ENCODE measurements at regions of chr10 and their contacts with region 1.

Region 1: DNA sequence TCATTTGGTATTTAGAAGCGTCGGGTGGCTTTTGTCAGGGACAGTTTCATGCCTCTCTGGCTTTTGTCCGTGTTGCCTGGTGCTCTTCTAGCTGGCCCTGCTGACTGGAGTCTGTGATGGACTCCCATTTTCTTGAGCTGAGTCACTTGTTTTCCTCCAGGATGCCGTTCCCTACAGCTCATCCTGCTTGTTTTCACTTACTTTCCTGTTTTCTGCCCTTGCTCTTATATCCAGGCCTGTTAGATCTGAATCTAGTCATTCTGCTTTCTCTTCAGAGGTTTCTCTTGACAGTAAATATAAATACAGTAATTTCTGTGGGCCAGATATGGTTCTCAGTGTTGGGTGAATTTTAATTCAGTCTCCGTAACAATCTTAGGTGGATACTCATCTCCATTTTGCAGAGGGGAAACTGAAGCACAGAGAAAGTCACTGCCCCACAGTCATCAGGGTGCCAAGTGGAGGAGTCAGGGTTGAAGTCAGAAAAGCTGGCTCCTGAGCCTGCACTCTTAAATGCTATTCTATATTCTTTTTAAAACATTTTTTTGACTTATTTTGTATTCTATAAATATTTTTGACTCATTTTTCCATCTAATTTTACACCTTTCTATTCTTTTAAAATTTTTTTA is 85.4 kb downstream of the CCNY start:
- DNase-seq: peak; percentile 82
- H3K4me3 Mint-ChIP-seq: peak overlapping the region; percentile 63
- H3K27ac Mint-ChIP-seq: peak overlapping the region; percentile 99
- H3K4me1 Mint-ChIP-seq: peaks cover 46% of the 10 kb centered on the region
- H3K27me3 Mint-ChIP-seq: no peaks in the 10 kb centered on the region
- CTCF ChIP-seq: no peak

Region 2: DNA sequence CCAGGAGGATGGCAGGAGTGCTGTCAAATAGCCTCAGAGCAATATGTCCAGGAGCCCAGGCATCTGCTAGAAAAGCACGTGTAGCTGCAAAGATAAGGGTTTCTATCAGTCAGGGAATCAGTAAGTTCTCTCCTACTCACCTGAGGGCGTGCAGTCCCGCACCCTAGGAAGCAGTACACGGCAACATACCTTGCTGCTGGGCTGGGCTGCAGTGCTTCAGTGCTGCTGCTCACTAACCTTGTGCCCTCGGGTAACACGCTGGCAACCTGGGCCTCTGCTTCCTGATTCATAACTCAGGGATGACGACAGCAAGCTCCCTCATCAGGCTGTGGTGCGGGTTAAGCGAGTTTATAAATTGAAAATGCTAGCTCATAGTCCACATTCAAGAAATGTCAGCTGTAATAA is 114.8 kb before region 1 on chr10:
- CTCF ChIA-PET with region 1: no interaction called
- POLR2A ChIA-PET with region 1: interaction called, 12 read pairs
- intact Hi-C with region 1: no loop called
- DNase-seq: peak; percentile 79
- H3K4me3 Mint-ChIP-seq: peak overlapping the region; percentile 66
- H3K27ac Mint-ChIP-seq: peak overlapping the region; percentile 94
- H3K4me1 Mint-ChIP-seq: peaks cover 18% of the 10 kb centered on the region
- H3K27me3 Mint-ChIP-seq: no peaks in the 10 kb centered on the region
- CTCF ChIP-seq: no peak

Region 3: DNA sequence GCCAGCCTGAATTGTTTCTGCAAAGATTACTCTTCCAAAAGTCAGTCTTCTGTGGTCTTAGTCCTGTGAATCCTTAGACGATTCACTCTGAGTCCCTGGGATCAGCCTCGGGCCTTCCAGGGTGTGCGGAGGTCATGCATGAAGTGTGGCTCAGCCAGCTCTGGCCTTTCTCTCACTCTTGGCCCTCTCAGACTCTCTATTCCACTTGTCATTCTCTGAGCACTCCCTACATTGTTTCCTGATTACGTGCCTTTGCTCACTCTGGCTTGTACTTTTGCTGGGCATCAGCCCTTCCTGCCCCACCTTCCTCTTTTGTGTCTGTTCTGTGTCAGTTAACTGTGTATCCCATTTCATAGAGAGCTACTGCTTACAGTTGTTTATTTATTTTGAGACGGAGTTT is 49.3 kb before region 1 on chr10:
- CTCF ChIA-PET with region 1: no interaction called
- POLR2A ChIA-PET with region 1: interaction called, 3 read pairs
- intact Hi-C with region 1: loop called (anchors 5 kb)
- DNase-seq: peak; percentile 81
- H3K4me3 Mint-ChIP-seq: peak overlapping the region; percentile 50
- H3K27ac Mint-ChIP-seq: peak overlapping the region; percentile 94
- H3K4me1 Mint-ChIP-seq: peaks cover 48% of the 10 kb centered on the region
- H3K27me3 Mint-ChIP-seq: no peaks in the 10 kb centered on the region
- CTCF ChIP-seq: no peak

Region 4: GRCh38 chr10:35409094-35409582 is 12.5 kb before region 1 on chr10:
- CTCF ChIA-PET with region 1: interaction called, 4 read pairs
- POLR2A ChIA-PET with region 1: interaction called, 16 read pairs
- intact Hi-C with region 1: no loop called
- DNase-seq: peak; percentile 73
- H3K4me3 Mint-ChIP-seq: no peak overlapping the region
- H3K27ac Mint-ChIP-seq: no peak overlapping the region
- H3K4me1 Mint-ChIP-seq: peaks cover 29% of the 10 kb centered on the region
- H3K27me3 Mint-ChIP-seq: no peaks in the 10 kb centered on the region
- CTCF ChIP-seq: no peak

Region 5: GRCh38 chr10:35447693-35448407 is 26.2 kb after region 1 on chr10:
- CTCF ChIA-PET with region 1: interaction called, 3 read pairs
- POLR2A ChIA-PET with region 1: interaction called, 35 read pairs
- intact Hi-C with region 1: no loop called
- DNase-seq: peak; percentile 78
- H3K4me3 Mint-ChIP-seq: peak overlapping the region; percentile 64
- H3K27ac Mint-ChIP-seq: peak overlapping the region; percentile 87
- H3K4me1 Mint-ChIP-seq: peaks cover 38% of the 10 kb centered on the region
- H3K27me3 Mint-ChIP-seq: no peaks in the 10 kb centered on the region
- CTCF ChIP-seq: no peak

Region 6: DNA sequence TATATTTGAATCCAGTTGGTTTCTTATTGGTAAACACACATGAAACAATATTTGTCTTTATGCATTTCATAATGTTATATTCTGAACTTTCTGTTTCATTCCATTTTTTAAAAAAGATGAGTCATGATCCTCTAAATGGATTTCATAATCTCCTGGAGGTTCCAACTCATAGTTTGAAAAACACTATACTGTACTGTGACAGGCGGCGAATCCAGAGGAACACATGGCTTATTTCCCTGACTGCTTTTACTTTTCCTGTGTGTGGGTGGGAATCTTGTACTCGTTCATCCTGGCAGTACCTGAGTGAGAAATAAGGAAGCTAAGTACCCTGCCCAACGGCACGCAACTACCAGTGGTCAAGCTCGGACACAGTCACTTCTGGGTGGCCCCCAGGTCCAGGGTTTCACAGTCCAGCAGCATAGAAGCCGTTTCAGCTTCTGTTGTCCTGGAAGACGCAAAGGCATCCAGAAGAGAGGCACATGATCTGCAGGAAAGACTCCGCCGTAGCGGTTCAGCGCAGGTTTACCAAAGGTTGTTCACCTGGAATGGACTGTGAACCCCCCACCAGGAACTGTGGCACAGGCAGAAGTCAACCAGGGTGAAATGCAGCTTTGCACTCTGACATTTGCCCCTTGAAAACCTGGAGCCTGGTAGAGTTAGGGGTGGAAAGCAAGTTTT is 32.3 kb after region 1 on chr10:
- CTCF ChIA-PET with region 1: interaction called, 3 read pairs
- POLR2A ChIA-PET with region 1: interaction called, 35 read pairs
- intact Hi-C with region 1: no loop called
- DNase-seq: peak; percentile 86
- H3K4me3 Mint-ChIP-seq: peak overlapping the region; percentile 69
- H3K27ac Mint-ChIP-seq: peak overlapping the region; percentile 88
- H3K4me1 Mint-ChIP-seq: peaks cover 50% of the 10 kb centered on the region
- H3K27me3 Mint-ChIP-seq: no peaks in the 10 kb centered on the region
- CTCF ChIP-seq: no peak

Region 7: GRCh38 chr10:35598384-35598783 is 176.7 kb after region 1 on chr10:
- CTCF ChIA-PET with region 1: no interaction called
- POLR2A ChIA-PET with region 1: no interaction called
- intact Hi-C with region 1: no loop called
- DNase-seq: no peak
- H3K4me3 Mint-ChIP-seq: no peak overlapping the region
- H3K27ac Mint-ChIP-seq: no peak overlapping the region
- H3K4me1 Mint-ChIP-seq: no peaks in the 10 kb centered on the region
- H3K27me3 Mint-ChIP-seq: peaks cover 33% of the 10 kb centered on the region
- CTCF ChIP-seq: peak; percentile 16